ENCODE measurements at regions of chr11 and their contacts with region 1.

Region 1: GRCh38 chr11:103798026-103798425 is 238.4 kb upstream of the DDI1 start:
- DNase-seq: peak; percentile 75
- H3K4me3 ChIP-seq: no peak overlapping the region
- H3K27ac ChIP-seq: peak overlapping the region; percentile 21
- H3K4me1 ChIP-seq: peaks cover 23% of the 10 kb centered on the region
- H3K27me3 ChIP-seq: no peaks in the 10 kb centered on the region
- CTCF ChIP-seq: no peak
- POLR2A ChIP-seq: no peak

Region 2: DNA sequence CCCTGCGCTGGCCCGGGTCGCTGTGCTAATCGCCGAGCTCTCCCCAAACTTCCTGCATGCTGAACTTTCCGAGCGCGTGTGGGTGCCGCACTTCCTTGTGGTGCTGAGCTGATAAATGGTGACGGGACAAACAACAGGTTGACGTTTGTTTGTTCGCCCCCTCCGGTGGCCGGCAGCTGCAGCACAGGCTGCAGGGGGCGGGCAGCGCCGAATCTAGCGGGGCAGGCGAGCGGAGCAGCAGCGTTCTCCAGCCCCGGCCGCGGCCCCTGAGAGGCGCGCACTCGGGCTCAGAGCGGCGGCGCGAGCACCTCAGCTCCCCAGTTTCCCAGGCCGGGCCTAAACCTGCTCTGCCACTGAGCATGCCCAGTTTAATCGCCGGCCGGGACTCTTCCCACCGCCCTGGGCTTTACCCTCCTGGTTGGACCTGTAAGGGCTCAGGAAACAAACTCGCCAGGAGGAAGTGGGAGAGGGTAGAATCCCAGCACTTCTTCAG is 366.0 kb after region 1 on chr11 and contains the start of gene PDGFD:
- CTCF ChIA-PET with region 1: no interaction called
- POLR2A ChIA-PET with region 1: no interaction called
- dilution Hi-C with region 1: no loop called
- intact Hi-C with region 1: loop called (anchors 1 kb)
- DNase-seq: peak; percentile 89
- H3K4me3 ChIP-seq: peak within 1 kb of the TSS; percentile 66 to 94 (median 93)
- H3K27ac ChIP-seq: peak within 1 kb of the TSS; percentile 52
- H3K4me1 ChIP-seq: peaks cover 10% of the 10 kb centered on the region
- H3K27me3 ChIP-seq: no peaks in the 10 kb centered on the region
- CTCF ChIP-seq: peak; percentile 57 to 73
- POLR2A ChIP-seq: no peak
- total RNA-seq, gene PDGFD: 13.1 and 14.1 TPM in 2 replicates

Region 3: DNA sequence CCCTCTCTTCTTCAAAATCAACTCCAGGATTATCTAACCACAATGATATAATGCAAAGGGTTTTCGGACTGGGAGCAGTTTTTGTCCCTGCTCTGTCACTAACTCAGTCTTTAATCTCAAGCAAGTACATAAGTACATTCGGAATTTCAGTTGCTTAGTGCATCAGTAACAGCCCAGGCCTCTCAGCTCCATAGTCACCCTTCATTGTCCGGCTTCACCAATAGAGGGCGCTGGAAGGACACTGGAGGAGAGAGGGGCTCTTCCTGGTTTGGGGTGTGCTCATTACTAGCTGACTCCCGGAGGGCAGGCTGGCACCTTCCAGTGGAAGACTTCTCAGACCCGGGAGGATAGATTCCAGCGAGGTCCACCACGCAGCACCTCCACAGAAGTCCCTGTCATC is 456.3 kb after region 1 on chr11:
- CTCF ChIA-PET with region 1: no interaction called
- POLR2A ChIA-PET with region 1: no interaction called
- dilution Hi-C with region 1: no loop called
- intact Hi-C with region 1: loop called (anchors 10 kb)
- DNase-seq: peak; percentile 23
- H3K4me3 ChIP-seq: no peak overlapping the region
- H3K27ac ChIP-seq: no peak overlapping the region
- H3K4me1 ChIP-seq: no peaks in the 10 kb centered on the region
- H3K27me3 ChIP-seq: no peaks in the 10 kb centered on the region
- CTCF ChIP-seq: peak; percentile 52 to 62
- POLR2A ChIP-seq: no peak

Measured in endothelial cell of umbilical vein (primary cell).